HepG2 (cell line): ENCODE measurements at regions of chr15 and their contacts with region 1.

Region 1: DNA sequence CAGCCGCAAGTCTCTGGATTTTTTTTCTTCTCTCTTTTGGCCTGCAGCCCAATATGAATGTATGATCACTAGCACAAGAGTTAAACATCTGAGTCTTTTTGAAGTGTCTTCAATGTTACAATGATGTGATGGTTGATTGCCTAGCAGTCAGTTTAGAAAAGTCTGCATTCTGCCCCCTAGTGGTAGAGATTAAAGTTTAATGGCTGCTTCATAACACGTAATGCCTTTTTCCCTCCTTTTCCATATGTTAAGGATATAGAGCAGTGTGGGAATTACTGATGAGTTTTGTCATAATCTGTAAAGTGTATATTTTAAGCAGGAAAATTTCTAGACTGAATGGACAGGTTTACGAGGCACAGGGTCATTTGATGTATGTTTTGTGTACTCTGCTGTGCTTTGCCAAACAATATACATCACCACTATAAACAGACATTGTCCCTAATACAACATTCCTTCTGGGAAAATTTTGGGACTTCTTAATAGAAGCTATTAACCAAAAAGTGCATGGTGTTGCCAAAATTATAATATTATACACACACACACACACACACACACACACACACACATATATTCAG is 1038.5 kb upstream of the NR2F2 start:
- DNase-seq: peak; percentile 28
- ATAC-seq: peak; percentile 65
- H3K4me3 ChIP-seq: no peak overlapping the region
- H3K27ac ChIP-seq: no peak overlapping the region
- H3K4me1 ChIP-seq: no peaks in the 10 kb centered on the region
- H3K27me3 ChIP-seq: no peaks in the 10 kb centered on the region; a peak in 1 of 5 replicates
- CTCF ChIP-seq: peak; percentile 57
- EP300 ChIP-seq: no peak
- POLR2A ChIP-seq: no peak
- RAD21 ChIP-seq: 0 out of 2 replicates have a peak, but pooled peaks have one; percentile 11

Region 2: GRCh38 chr15:95025924-95026728 is 265.9 kb before region 1 on chr15:
- CTCF ChIA-PET with region 1: no interaction called
- POLR2A ChIA-PET with region 1: no interaction called
- in situ Hi-C with region 1: no loop called
- intact Hi-C with region 1: loop called (anchors 5 kb)
- DNase-seq: no peak
- ATAC-seq: peak; percentile 35; the same call in 2 of the 3 replicates
- H3K4me3 ChIP-seq: no peak overlapping the region
- H3K27ac ChIP-seq: no peak overlapping the region
- H3K4me1 ChIP-seq: no peaks in the 10 kb centered on the region
- H3K27me3 ChIP-seq: no peaks in the 10 kb centered on the region
- CTCF ChIP-seq: 0 out of 2 replicates have a peak, but pooled peaks have one; percentile 11
- EP300 ChIP-seq: no peak
- POLR2A ChIP-seq: no peak
- RAD21 ChIP-seq: no peak

Region 3: GRCh38 chr15:95341686-95342085 is 49.7 kb after region 1 on chr15:
- CTCF ChIA-PET with region 1: no interaction called
- POLR2A ChIA-PET with region 1: no interaction called
- in situ Hi-C with region 1: no loop called
- intact Hi-C with region 1: no loop called
- DNase-seq: no peak
- ATAC-seq: no peak
- H3K4me3 ChIP-seq: no peak overlapping the region
- H3K27ac ChIP-seq: no peak overlapping the region
- H3K4me1 ChIP-seq: no peaks in the 10 kb centered on the region
- H3K27me3 ChIP-seq: no peaks in the 10 kb centered on the region
- CTCF ChIP-seq: no peak
- EP300 ChIP-seq: no peak
- POLR2A ChIP-seq: no peak
- RAD21 ChIP-seq: no peak

Region 4: DNA sequence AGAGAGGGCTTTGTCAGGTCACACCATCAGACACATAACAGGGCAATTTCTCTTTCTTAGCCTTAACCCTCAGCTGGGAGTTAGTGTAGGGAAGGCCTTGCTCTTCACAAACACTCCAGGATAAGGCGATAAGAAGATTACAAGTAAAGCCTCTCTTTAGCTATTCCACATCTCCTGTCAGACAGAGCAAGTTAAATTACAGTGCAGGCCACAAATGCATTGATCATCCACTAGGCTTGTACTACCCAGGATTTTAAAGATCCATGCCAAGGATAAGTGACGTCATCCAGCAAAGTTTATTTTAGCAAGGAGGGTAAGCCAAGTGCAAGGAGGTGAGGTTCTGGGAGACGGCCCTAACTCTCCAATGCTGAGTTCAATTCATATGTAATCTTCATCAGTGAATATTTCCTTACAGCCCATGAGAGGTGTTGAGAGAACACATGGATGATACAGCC is 148.0 kb after region 1 on chr15:
- CTCF ChIA-PET with region 1: no interaction called
- POLR2A ChIA-PET with region 1: no interaction called
- in situ Hi-C with region 1: no loop called
- intact Hi-C with region 1: no loop called
- DNase-seq: no peak
- ATAC-seq: no peak
- H3K4me3 ChIP-seq: no peak overlapping the region
- H3K27ac ChIP-seq: no peak overlapping the region
- H3K4me1 ChIP-seq: no peaks in the 10 kb centered on the region
- H3K27me3 ChIP-seq: no peaks in the 10 kb centered on the region
- CTCF ChIP-seq: no peak
- EP300 ChIP-seq: no peak
- POLR2A ChIP-seq: no peak
- RAD21 ChIP-seq: no peak